ENCODE measurements at regions of chr1 and their contacts with region 1.

Region 1: GRCh38 chr1:33025181-33025571 is 11.5 kb downstream of the AK2 start:
- DNase-seq: no peak
- H3K4me3 Mint-ChIP-seq: no peak overlapping the region
- H3K27ac Mint-ChIP-seq: peak overlapping the region; percentile 83
- H3K4me1 Mint-ChIP-seq: peaks cover 63% of the 10 kb centered on the region
- H3K27me3 Mint-ChIP-seq: no peaks in the 10 kb centered on the region

Region 2: GRCh38 chr1:32786856-32787255 is 238.3 kb before region 1 on chr1:
- CTCF ChIA-PET with region 1: no interaction called
- POLR2A ChIA-PET with region 1: no interaction called
- intact Hi-C with region 1: no loop called
- DNase-seq: no peak
- H3K4me3 Mint-ChIP-seq: no peak overlapping the region
- H3K27ac Mint-ChIP-seq: no peak overlapping the region
- H3K4me1 Mint-ChIP-seq: peaks cover 6% of the 10 kb centered on the region
- H3K27me3 Mint-ChIP-seq: no peaks in the 10 kb centered on the region

Region 3: DNA sequence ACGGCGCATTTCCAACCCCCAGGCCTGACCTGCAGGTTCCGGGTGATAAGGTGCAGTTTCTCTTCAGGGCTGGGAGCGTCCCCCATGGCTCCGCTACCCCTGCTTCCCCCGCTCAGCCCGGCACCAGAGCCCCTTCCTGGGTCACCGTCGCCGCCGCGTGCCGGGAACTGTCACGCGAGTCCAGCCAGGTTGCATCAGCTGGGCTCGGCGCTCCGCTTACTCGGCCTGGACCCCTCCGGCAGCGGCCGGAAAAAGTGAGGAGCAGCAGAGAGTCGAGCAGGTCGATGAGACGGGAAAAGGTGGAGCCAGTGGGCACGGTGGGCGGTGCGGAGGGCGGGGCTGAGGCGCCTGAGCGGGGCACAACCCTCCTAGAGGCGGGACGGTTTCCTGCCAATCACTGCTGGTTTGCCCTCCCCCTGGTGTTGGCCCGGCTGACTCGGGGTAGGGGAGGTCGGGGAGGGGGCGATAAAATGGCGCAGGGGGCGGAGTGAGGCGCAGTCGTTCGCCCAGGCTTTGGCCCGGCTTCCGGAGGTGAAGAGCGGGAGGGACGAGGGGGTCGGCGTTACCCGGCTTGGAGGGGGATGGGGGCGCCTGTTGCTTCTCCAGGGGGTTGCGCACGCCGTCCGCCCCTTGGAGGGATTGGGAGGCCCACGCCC is 207.9 kb before region 1 on chr1 and contains the starts of genes S100PBP and YARS1:
- CTCF ChIA-PET with region 1: no interaction called
- POLR2A ChIA-PET with region 1: no interaction called
- intact Hi-C with region 1: loop called (anchors 1 kb)
- DNase-seq: peak; percentile 100
- H3K4me3 Mint-ChIP-seq: peak within 1 kb of the TSS; percentile 99
- H3K27ac Mint-ChIP-seq: peak within 1 kb of the TSS; percentile 94
- H3K4me1 Mint-ChIP-seq: peaks cover 50% of the 10 kb centered on the region
- H3K27me3 Mint-ChIP-seq: no peaks in the 10 kb centered on the region
- total RNA-seq, gene S100PBP: 30.4 to 32.7 TPM
- total RNA-seq, gene YARS1: 208 to 213 TPM

Region 4: DNA sequence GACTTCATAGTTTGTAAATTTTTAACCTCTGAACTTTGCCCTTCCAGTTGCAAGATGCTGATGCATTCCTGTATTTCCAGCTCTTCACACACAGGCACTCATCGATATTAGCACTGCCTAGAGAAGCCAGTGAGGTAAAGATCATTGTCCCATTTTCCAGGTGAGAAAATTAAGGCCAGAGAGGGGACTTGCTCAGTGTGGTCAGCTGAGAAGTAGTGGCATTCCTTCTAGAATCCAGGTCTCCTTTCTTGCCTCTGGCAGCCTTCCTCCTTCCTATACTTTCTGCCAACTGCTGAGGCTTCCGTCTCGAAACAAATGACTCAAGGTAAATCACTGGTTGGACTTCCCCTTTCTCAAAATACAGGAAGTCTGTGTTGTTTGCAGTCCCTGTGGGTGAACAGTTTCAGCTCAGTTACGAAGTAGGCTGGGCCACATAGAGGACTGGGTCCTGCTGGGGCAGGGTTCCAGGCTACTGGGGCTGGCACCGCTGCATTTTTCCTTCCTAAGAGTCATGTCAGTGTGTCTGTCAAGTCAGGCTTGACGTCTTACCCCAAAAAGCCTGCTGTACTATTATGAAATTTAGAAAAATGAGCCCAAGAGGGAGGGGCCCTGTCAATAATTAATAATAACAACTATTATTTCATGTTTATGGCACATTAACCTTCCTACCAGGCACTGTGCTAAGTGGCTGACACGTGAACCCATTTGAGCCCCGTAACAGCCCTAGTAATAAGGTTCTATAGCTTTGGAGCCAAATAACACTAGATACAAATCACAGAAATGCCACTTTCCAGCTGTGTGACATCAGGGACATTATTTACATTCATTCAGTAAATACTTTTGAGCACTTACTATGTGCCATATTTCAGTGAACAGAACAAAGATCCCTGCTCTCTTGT is 43.9 kb before region 1 on chr1:
- CTCF ChIA-PET with region 1: interaction called, 3 read pairs
- POLR2A ChIA-PET with region 1: interaction called, 4 read pairs
- intact Hi-C with region 1: loop called (anchors 1 kb)
- DNase-seq: peak; percentile 84
- H3K4me3 Mint-ChIP-seq: peak overlapping the region; percentile 53
- H3K27ac Mint-ChIP-seq: peak overlapping the region; percentile 88
- H3K4me1 Mint-ChIP-seq: peaks cover 57% of the 10 kb centered on the region
- H3K27me3 Mint-ChIP-seq: no peaks in the 10 kb centered on the region

Region 5: DNA sequence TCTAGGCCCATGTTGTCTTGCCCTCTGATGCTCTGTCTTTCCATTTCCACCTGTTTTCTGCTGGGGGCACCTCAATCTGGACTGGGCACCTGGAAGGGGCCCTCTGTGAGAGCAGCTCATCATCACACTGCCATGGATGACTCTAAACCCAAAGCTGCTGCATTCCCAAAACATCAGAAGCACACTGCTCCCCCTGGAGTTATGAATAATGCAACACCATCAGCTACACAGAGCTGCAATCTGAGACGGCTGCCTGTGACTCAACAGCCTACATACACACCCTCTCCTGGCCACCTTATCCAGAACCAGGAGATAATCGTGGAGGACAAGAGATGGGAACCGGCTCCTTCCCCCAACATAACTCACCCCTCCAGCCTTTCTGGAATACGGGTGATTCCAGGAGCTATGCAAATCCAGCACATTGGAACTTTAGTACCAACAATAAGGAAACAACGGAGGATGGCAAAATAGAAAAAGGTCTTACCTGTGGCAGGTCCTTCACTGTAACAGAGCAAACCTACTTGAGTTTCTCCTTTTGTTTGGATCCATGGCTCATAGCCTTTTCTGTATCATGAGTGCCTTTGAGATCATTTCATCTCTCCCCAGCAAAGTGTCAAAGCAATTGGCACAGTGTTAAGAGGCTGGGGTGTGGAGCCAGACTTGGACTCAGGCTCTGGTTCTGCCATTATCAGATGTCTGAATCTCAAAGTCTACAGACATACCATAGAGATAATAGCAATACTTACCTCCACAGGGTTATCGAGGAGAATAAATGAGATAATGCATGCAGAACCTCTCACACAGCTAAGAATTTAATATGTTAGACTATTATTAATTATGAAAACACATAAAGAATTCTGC is 17.8 kb before region 1 on chr1:
- CTCF ChIA-PET with region 1: interaction called, 3 read pairs
- POLR2A ChIA-PET with region 1: interaction called, 3 read pairs
- intact Hi-C with region 1: loop called (anchors 1 kb)
- DNase-seq: peak; percentile 40
- H3K4me3 Mint-ChIP-seq: no peak overlapping the region
- H3K27ac Mint-ChIP-seq: no peak overlapping the region
- H3K4me1 Mint-ChIP-seq: peaks cover 41% of the 10 kb centered on the region
- H3K27me3 Mint-ChIP-seq: no peaks in the 10 kb centered on the region

Region 6: GRCh38 chr1:33055210-33056008 is 30.2 kb after region 1 on chr1:
- CTCF ChIA-PET with region 1: interaction called, 24 read pairs
- POLR2A ChIA-PET with region 1: no interaction called
- intact Hi-C with region 1: loop called (anchors 1 kb)
- DNase-seq: peak; percentile 49
- H3K4me3 Mint-ChIP-seq: no peak overlapping the region
- H3K27ac Mint-ChIP-seq: no peak overlapping the region
- H3K4me1 Mint-ChIP-seq: peaks cover 3% of the 10 kb centered on the region
- H3K27me3 Mint-ChIP-seq: peaks cover 5% of the 10 kb centered on the region

Region 7: DNA sequence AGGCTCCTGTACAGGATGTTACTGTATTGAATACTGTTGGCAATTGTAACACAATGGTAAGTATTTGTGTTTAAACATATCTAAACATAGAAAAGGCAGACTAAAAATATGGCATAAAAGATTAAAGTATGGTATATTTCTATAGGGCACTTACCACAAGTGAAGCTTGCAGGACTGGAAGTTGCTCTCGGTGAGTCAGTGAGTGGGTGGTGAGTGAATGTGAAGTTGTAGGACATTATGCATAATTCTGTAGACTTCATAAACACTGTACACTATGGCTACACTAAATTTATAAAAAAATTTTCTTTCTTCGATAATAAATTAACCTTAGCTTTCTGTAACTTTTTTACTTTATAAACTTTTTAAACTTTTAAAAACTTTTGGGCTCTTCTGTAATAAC is 170.4 kb after region 1 on chr1:
- CTCF ChIA-PET with region 1: no interaction called
- POLR2A ChIA-PET with region 1: no interaction called
- intact Hi-C with region 1: no loop called
- DNase-seq: no peak
- H3K4me3 Mint-ChIP-seq: no peak overlapping the region
- H3K27ac Mint-ChIP-seq: no peak overlapping the region
- H3K4me1 Mint-ChIP-seq: peaks cover 6% of the 10 kb centered on the region
- H3K27me3 Mint-ChIP-seq: peaks cover 8% of the 10 kb centered on the region

Measured in activated CD4-positive, alpha-beta memory T cell treated with anti-CD3 and anti-CD28 coated beads for 36 hours (primary cell).